Adrenal gland (tissue), 19 donors: ENCODE measurements at regions of chr1 and their contacts with region 1.

Region 1: DNA sequence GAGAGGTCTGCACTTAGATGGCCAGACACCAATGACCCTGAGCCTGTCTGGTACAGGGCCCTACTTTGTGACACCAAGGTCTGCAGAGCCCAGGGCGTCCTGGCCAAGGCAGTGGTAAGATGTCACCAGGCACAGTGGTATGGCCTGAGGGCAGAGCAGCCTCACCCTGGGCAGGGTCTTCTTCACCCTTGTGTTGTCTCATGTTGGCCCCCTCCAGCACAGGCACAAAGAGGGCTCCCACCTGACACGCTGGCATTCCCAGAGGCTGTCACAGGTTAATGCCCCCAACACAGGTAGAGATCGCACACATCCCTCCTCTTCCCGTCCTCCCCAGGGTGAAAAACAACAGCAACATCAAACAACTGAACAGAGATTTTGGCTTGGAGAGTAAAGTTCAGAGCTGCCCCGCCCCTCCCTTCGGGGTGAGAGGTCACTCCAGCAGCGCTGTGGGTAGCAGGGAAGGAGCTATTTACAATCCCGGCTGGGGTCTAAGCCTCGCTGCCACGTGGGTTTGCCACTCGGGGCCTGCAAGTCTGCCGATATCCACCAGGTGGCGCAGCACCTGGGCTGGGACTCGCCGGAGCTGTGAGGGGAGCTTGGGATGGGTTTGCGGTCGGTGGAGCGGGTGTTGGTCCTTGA is 12.6 kb downstream of the EFNA3 start:
- DNase-seq: peak; percentile 68 to 87 (median 80)
- H3K4me3 ChIP-seq: no peak overlapping the region
- H3K27ac ChIP-seq: no peak overlapping the region
- H3K4me1 ChIP-seq: peaks cover 0 to 9% of the 10 kb centered on the region in 2 donors
- H3K27me3 ChIP-seq: no peaks in the 10 kb centered on the region
- CTCF ChIP-seq: peak; percentile 92 to 100 (median 97)
- POLR2A ChIP-seq: no peak

Region 2: DNA sequence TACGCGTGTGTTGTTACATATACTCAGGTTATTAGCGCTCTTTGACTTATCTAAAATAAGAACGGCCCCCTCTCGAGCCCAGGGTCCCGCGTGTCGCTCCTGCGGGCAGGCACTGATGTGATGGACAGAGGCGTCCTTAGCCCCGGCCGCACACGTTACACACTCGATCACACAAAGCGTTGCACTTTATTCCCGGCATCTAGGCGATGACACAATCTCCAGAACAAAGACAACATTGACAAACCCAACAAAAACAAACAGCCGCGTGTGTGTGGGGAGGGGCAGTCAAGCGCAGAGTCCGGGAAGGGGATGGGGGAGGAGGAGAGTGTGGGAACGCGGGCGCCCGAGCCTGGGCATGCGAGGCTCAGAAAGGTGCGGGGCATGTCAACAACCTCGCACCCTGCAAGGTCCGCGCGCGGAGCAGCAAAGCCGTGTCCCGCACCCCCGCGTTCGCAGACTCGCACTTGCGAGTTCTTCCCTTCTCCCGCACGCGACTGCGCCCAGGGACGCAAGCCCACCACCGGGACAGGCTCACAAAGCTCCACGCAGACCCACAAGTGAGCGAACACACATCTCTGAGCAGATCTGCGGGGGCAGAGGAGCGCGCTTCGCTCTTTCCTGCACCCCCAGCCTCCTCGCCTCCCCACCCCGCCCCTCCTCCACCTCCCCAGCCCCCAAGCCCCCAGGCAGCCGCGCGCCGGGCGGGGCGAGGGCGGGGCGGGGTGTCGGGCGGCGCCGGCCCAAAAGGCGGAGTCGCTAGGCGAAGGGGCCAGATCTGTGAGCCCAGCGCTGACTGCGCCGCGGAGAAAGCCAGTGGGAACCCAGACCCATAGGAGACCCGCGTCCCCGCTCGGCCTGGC is 36.1 kb after region 1 on chr1 and contains the start of gene EFNA1:
- intact Hi-C with region 1: loop called in 1 of 2 experiments (anchors 5 kb)
- DNase-seq: peak in 6 of 7 donors; percentile 54 to 86 (median 68)
- H3K4me3 ChIP-seq: peak within 1 kb of the TSS in 3 of 4 donors; percentile 28 to 71 (median 45)
- H3K27ac ChIP-seq: peak within 1 kb of the TSS; percentile 17 to 81 (median 70)
- H3K4me1 ChIP-seq: peaks cover 28 to 39% of the 10 kb centered on the region in 2 donors
- H3K27me3 ChIP-seq: no peaks in the 10 kb centered on the region
- CTCF ChIP-seq: no peak
- POLR2A ChIP-seq: peak; percentile 14 to 71
- total RNA-seq, gene EFNA1: 9.9 to 49.7 (median 27.7) TPM

Region 3: GRCh38 chr1:155139895-155140631 is 48.9 kb after region 1 on chr1 and contains the start of gene DPM3:
- intact Hi-C with region 1: no loop called
- DNase-seq: peak; percentile 86 to 94 (median 90)
- H3K4me3 ChIP-seq: peak within 1 kb of the TSS; percentile 44 to 87 (median 64)
- H3K27ac ChIP-seq: peak within 1 kb of the TSS; percentile 71 to 95 (median 94)
- H3K4me1 ChIP-seq: peaks cover 20 to 26% of the 10 kb centered on the region in 2 donors
- H3K27me3 ChIP-seq: no peaks in the 10 kb centered on the region
- CTCF ChIP-seq: peak in 1 of 6 experiments; percentile 11
- POLR2A ChIP-seq: peak; percentile 27 to 65
- total RNA-seq, gene DPM3: 45.4 to 192 (median 159) TPM

Region 4: DNA sequence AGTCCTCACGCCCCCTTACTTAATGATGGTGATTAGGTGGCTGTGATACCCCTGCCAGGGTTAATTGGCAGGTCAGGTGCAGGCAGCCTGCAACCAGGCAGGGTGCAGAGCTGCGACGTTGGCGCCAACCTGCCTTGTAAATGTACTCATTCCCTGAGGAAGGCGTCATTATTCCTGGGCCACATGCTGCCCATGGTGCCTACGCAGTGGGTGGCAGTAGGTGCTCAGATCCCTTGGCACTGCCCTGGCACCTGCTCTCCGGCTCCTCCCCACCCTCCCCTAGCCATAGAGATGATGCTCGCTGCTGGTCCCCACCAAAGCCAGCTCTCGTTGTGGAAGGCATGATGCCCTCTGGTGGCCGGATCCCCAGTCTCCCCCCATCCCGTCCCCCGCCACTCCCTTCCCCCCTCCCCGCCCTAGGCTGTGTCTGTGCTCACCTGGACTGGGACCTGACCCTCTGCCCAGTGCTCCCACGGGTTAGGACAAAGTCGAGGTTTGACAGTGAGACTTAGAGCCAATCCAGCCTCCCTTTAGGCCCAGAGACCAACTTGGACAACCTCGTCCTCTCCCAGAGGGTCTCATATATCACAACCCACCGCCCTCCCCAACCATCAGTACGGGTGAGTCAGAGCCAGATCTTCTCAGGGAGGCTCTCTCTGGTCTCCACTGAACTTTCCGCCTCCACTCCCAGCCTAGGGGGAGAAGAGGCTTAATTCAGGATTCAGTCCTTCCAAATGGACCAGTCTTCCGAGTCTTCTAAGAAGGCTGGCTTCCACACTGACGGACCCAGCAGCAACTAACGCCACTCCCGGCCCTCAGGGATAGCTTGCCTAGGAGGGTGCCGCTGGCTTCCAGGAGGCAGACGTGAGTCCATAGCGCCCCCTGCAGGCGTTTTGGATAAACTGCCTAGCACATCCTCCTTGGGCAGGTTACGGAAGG is 76.2 kb after region 1 on chr1:
- intact Hi-C with region 1: loop called (anchors 2 kb)
- DNase-seq: peak; percentile 85 to 94 (median 91)
- H3K4me3 ChIP-seq: no peak overlapping the region
- H3K27ac ChIP-seq: peak overlapping the region in 1 of 5 donors; percentile 48
- H3K4me1 ChIP-seq: peaks cover 4 to 26% of the 10 kb centered on the region in 2 donors
- H3K27me3 ChIP-seq: no peaks in the 10 kb centered on the region
- CTCF ChIP-seq: peak; percentile 83 to 97 (median 92)
- POLR2A ChIP-seq: no peak

Region 5: GRCh38 chr1:155227261-155228095 is 136.3 kb after region 1 on chr1:
- intact Hi-C with region 1: no loop called
- DNase-seq: peak; percentile 97 to 100 (median 98)
- H3K4me3 ChIP-seq: peak overlapping the region in 3 of 4 donors; percentile 27 to 60 (median 36)
- H3K27ac ChIP-seq: peak overlapping the region; percentile 60 to 90 (median 89)
- H3K4me1 ChIP-seq: peaks cover 29 to 37% of the 10 kb centered on the region in 2 donors
- H3K27me3 ChIP-seq: no peaks in the 10 kb centered on the region
- CTCF ChIP-seq: no peak
- POLR2A ChIP-seq: peak; percentile 43 to 83

Region 6: DNA sequence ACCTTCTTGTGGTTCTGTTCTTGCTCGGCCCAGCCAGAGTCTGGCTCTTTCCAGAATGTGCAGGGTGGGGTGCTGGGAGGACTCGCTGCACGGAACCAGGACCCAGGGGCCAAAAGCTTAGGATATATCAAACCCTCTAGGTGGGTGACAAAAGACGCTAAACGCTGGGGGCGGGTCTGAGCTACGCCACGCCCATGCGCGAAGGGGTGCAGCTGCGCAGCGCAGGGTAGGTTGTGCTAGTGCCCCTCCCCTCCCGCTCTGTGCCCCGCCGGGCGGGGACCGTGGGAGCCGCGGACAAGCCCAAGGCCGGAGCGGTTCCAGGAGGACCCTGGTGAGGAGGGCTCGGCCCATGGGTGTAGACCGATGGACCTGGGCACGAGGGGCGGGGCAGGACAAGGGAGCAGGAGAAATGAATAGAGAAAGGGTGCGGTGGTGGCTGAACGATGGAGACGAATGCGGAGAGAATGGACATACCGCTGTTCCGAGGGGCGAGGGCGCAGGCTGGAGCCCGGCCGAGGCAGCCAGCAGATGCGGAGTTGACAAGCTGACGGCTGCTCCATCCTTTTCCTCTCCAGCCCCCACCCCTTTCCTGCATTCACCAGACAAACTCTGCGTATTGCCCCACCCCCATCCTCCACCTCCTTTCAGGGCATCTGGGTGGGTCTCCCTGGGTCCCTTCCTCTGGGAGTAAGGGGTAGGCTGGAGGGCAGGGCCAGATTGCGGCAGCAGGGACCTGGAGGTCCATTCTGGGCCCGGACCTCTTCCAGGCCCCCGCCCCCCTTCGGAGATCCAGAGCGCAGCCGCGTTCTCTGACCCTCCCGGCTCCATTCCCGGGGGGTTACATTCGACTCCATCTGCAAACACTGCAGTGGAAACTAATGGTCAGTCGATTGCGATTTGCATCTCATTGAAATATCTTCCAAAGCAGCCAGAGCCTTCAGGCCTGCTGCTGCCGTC is 229.7 kb after region 1 on chr1 and contains the start of gene RUSC1:
- intact Hi-C with region 1: no loop called
- DNase-seq: peak; percentile 79 to 93 (median 86)
- H3K4me3 ChIP-seq: peak within 1 kb of the TSS in 2 of 4 donors; percentile 30 to 78
- H3K27ac ChIP-seq: peak within 1 kb of the TSS; percentile 41 to 97 (median 94)
- H3K4me1 ChIP-seq: peaks cover 26 to 41% of the 10 kb centered on the region in 2 donors
- H3K27me3 ChIP-seq: no peaks in the 10 kb centered on the region
- CTCF ChIP-seq: no peak
- POLR2A ChIP-seq: peak in 1 of 2 donors; percentile 38
- total RNA-seq, gene RUSC1: 9.8 to 64.9 (median 27.1) TPM